Ascending aorta (tissue), 2 donors: ENCODE measurements at regions of chr11 and their contacts with region 1.

Region 1: GRCh38 chr11:111911563-111912401 is at the start of gene CRYAB:
- DNase-seq: peak; percentile 90 to 98
- H3K4me3 ChIP-seq: peak within 1 kb of the TSS; percentile 66 to 88
- H3K27ac ChIP-seq: peak within 1 kb of the TSS; percentile 98 to 99
- H3K4me1 ChIP-seq: peaks cover 0 to 9% of the 10 kb centered on the region in 2 donors
- H3K27me3 ChIP-seq: no peaks in the 10 kb centered on the region
- CTCF ChIP-seq: no peak
- total RNA-seq, gene CRYAB: 288 TPM

Region 2: DNA sequence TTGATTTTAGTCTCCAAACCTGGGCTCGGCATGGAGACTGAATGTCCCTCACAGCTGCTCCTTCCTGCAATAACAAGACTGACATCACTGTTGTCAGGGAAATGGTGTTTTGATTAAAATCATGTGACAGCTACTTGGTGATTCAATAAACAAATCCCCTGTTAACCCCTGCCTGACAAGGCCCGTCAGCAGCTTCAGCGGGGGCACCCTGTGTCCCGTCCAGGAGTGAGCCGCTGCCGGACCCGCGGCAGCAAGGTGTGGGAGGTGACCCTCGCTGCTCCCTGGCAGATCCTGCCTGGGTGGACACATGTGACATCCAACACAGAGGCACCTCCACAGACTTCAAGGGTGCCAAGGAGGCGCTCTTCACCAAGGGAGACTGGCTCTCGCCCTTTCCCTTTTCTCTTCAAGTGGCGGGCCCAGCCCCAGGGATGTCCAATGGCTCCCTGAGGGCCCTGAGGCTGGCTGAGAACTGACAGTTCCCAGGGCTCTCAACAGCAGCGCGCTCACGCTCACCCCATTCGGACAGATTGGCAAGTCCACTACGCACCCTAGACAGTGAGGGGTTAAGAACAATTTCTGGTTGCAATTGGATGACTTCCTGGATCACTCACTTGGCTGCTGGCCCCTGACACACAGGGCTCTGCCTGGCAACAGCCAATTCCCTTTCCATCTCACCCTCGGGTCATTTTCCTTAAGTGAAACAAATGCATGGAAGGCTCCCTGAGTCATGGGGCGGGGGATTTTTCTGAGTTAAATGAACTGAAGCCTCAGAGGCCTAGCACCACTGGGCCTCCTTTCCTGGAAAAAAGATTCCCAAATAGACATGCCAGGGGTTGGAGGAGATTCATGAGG is 176.3 kb before region 1 on chr11:
- intact Hi-C with region 1: loop called (anchors 2 kb)
- DNase-seq: peak; percentile 47 to 95
- H3K4me3 ChIP-seq: peak overlapping the region; percentile 29 to 55
- H3K27ac ChIP-seq: peak overlapping the region; percentile 91 to 97
- H3K4me1 ChIP-seq: peaks cover 41 to 76% of the 10 kb centered on the region in 2 donors
- H3K27me3 ChIP-seq: no peaks in the 10 kb centered on the region
- CTCF ChIP-seq: no peak

Region 3: DNA sequence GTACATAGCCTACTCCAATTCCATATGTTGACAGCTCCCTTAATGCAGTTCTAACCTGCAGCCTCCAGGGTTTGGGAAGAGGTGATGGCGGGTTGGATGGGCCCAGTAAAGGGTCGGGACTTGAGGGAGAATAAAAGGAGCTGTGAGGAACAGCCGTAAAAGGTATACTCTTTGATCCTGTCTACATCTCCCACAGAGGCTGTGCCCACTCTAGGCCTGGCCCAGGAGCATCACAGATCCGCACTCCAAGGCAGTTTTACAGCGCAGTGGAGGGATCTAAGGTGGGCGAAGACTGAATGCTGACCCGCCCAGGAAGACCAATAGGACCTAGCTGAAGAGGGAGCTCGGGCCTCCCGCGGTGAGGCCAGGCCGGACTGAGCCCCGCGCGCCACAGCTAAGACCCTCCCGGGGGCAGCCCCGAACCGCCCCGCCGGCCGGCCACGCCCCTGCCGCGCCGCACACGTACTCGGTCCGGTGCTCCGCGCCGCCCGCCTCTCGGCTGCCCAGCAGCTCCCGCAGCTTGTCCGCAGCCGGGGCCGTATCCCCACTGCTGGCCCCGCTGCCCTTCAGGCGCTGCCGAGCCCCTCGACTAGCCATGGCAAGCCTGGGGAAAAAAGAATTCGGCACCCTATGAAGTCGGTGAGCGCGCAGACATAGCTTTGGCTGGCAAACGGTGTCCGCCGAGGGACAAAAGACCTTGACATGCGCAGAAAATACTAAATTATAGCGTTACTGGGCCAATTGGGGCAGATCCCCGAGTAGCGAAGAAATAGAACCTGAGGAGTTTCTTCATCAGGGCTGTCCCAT is 40.7 kb before region 1 on chr11 and contains the start of gene ALG9:
- intact Hi-C with region 1: loop called (anchors 2 kb)
- DNase-seq: peak; percentile 22 to 89
- H3K4me3 ChIP-seq: peak within 1 kb of the TSS; percentile 92 to 97
- H3K27ac ChIP-seq: peak within 1 kb of the TSS; percentile 85 to 96
- H3K4me1 ChIP-seq: peaks cover 0 to 8% of the 10 kb centered on the region in 2 donors
- H3K27me3 ChIP-seq: no peaks in the 10 kb centered on the region
- CTCF ChIP-seq: peak in 1 of 3 experiments; percentile 40
- total RNA-seq, gene ALG9: 16.8 TPM

Region 4: GRCh38 chr11:111878849-111879636 is 32.7 kb before region 1 on chr11 and contains the starts of genes CFAP68 and FDXACB1:
- intact Hi-C with region 1: loop called (anchors 1 kb)
- DNase-seq: peak; percentile 89 to 99
- H3K4me3 ChIP-seq: peak within 1 kb of the TSS; percentile 71 to 74
- H3K27ac ChIP-seq: peak within 1 kb of the TSS; percentile 90 to 97
- H3K4me1 ChIP-seq: peaks cover 0 to 11% of the 10 kb centered on the region in 2 donors
- H3K27me3 ChIP-seq: no peaks in the 10 kb centered on the region
- CTCF ChIP-seq: peak; percentile 97 to 98 (median 98)
- total RNA-seq, gene CFAP68: not detected
- total RNA-seq, gene FDXACB1: 0.53 TPM

Region 5: GRCh38 chr11:111926505-111927391 is 15.0 kb after region 1 on chr11:
- intact Hi-C with region 1: loop called (anchors 1 kb)
- DNase-seq: peak; percentile 92 to 98
- H3K4me3 ChIP-seq: peak overlapping the region; percentile 40 to 57
- H3K27ac ChIP-seq: peak overlapping the region; percentile 89 to 92
- H3K4me1 ChIP-seq: peaks cover 14 to 40% of the 10 kb centered on the region in 2 donors
- H3K27me3 ChIP-seq: no peaks in the 10 kb centered on the region
- CTCF ChIP-seq: no peak

Region 6: GRCh38 chr11:111944651-111945051 is 32.9 kb after region 1 on chr11:
- intact Hi-C with region 1: loop called (anchors 2 kb)
- DNase-seq: no peak
- H3K4me3 ChIP-seq: peak overlapping the region in 1 of 2 donors; percentile 20
- H3K27ac ChIP-seq: peak overlapping the region; percentile 91 to 92
- H3K4me1 ChIP-seq: peaks cover 10 to 32% of the 10 kb centered on the region in 2 donors
- H3K27me3 ChIP-seq: no peaks in the 10 kb centered on the region
- CTCF ChIP-seq: no peak